ENCODE measurements at regions of chr1 and their contacts with region 1.

Region 1: DNA sequence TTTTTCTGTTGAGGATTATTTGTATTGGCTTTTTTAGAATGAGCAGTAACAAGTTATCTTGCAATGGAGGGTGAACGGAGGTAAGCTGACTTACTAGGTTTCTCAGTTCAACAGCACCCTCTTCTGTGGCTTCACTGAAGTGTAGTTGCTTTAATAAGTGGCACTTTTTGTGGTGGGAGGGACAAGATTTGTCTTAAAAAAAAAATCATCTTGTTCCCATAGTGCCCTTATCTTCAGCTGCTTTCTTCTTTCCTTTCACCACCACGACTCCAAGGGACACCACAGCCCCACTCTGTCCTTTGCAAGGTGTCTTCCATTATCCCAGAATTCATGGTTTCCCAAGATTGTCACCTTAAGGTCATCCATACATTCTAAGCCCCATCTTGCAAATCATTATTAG is 92.9 kb downstream of the PIGK start:
- DNase-seq: peak in 3 of 5 donors; percentile 15 to 37 (median 19)
- H3K4me3 ChIP-seq: no peak overlapping the region
- H3K27ac ChIP-seq: no peak overlapping the region
- H3K4me1 ChIP-seq: no peaks in the 10 kb centered on the region
- H3K27me3 ChIP-seq: no peaks in the 10 kb centered on the region
- CTCF ChIP-seq: peak in 2 of 3 donors; percentile 45 to 59
- EP300 ChIP-seq: no peak
- POLR2A ChIP-seq: no peak

Region 2: DNA sequence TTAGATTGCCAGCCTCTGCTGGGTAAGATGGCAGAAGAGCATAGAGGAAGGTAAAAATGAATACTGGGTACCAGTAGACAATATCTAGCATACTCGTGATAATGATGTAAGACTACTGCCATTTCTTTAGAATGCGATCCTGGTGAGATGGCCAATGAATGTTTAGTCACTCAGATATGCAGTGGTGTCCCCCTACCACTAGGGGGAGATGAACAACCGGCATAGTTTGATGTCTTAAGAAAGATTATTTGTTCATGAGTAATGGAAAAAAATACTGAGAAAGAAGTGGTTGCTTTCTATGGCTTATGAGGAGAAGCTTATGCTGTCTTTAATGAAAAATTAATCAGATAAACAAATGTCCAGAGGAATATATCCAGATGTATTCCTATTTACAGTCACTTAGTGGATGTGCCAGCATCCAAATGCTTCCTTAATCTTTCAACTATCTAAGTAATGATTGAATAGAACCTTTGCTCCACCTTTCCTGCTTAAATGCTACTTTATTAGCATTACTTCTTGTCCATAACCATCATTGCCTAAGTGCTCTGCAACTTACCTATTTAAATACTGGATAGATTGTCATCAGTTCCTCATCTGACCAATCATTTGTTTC is 795.2 kb before region 1 on chr1:
- intact Hi-C with region 1: loop called in 2 of 4 experiments (anchors 5 to 10 kb)
- DNase-seq: peak in 3 of 5 donors; percentile 15 to 55 (median 25)
- H3K4me3 ChIP-seq: no peak overlapping the region
- H3K27ac ChIP-seq: no peak overlapping the region
- H3K4me1 ChIP-seq: no peaks in the 10 kb centered on the region
- H3K27me3 ChIP-seq: no peaks in the 10 kb centered on the region
- CTCF ChIP-seq: peak; percentile 51 to 65 (median 60)
- EP300 ChIP-seq: no peak
- POLR2A ChIP-seq: no peak

Region 3: GRCh38 chr1:76901158-76901767 is 225.0 kb before region 1 on chr1:
- intact Hi-C with region 1: loop called in 1 of 4 experiments (anchors 10 kb)
- DNase-seq: peak; percentile 37 to 63 (median 44)
- H3K4me3 ChIP-seq: no peak overlapping the region
- H3K27ac ChIP-seq: no peak overlapping the region
- H3K4me1 ChIP-seq: no peaks in the 10 kb centered on the region
- H3K27me3 ChIP-seq: no peaks in the 10 kb centered on the region
- CTCF ChIP-seq: peak in 2 of 3 donors; percentile 49 to 51
- EP300 ChIP-seq: no peak
- POLR2A ChIP-seq: no peak

Region 4: GRCh38 chr1:77084457-77084856 is 41.9 kb before region 1 on chr1:
- intact Hi-C with region 1: no loop called
- DNase-seq: no peak
- H3K4me3 ChIP-seq: no peak overlapping the region
- H3K27ac ChIP-seq: no peak overlapping the region
- H3K4me1 ChIP-seq: no peaks in the 10 kb centered on the region
- H3K27me3 ChIP-seq: no peaks in the 10 kb centered on the region
- CTCF ChIP-seq: no peak
- EP300 ChIP-seq: no peak
- POLR2A ChIP-seq: no peak

Region 5: DNA sequence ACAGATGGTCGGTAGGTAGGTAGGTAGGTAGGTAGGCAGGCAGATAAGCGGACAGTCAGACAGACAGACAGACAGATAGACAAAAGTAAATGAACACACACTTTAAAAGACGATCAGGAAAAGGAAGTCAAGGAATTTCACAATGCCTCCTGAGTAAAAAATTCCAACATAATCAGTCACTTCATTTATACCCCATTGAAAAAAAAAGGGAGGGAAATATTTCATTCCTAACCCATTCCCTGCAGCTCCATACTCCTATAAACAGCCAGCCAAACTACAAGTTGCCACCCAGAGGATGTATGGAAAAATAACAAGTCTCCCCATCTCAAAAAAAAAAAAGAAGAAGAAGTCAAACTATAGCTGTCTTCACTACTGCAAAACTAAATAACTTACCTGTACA is 512.7 kb after region 1 on chr1:
- intact Hi-C with region 1: no loop called
- DNase-seq: no peak
- H3K4me3 ChIP-seq: no peak overlapping the region
- H3K27ac ChIP-seq: no peak overlapping the region
- H3K4me1 ChIP-seq: no peaks in the 10 kb centered on the region
- H3K27me3 ChIP-seq: peaks cover 2% of the 10 kb centered on the region
- CTCF ChIP-seq: no peak
- EP300 ChIP-seq: no peak
- POLR2A ChIP-seq: no peak

Measured in ovary (tissue), 10 donors.